Aorta (tissue), 5 donors: ENCODE measurements at regions of chr12 and their contacts with region 1.

Region 1: DNA sequence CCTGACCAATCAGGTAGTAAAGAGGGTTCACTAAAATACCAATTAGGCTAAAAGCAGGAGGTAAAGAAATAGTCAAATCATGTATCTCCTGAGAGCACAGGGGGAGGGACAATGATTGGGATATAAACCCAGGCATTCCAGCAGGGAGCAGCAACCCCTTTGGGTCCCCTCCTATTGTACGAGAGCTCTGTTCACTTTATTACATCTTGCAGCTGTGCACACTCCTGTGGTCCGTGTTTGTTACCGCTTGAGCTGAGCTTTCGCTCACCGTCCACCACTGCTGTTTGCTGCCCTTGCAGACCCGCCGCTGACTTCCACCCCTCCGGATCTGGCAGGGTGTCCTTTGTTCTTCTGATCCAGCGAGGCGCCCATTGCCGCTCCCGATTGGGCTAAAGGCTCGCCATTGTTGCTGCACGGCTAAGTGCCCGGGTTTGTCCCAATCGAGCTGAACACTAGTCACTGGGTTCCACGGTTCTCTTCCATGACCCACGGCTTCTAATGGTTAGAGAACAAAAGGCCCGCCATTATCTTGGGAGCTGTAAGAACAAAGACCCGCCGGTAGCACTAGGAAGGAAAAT is 64.1 kb downstream of the E2F7 start:
- DNase-seq: peak in 1 of 2 donors; percentile 60
- ATAC-seq: no peak
- H3K4me3 ChIP-seq: no peak overlapping the region
- H3K27ac ChIP-seq: no peak overlapping the region
- H3K4me1 ChIP-seq: no peaks in the 10 kb centered on the region
- H3K27me3 ChIP-seq: no peaks in the 10 kb centered on the region

Region 2: DNA sequence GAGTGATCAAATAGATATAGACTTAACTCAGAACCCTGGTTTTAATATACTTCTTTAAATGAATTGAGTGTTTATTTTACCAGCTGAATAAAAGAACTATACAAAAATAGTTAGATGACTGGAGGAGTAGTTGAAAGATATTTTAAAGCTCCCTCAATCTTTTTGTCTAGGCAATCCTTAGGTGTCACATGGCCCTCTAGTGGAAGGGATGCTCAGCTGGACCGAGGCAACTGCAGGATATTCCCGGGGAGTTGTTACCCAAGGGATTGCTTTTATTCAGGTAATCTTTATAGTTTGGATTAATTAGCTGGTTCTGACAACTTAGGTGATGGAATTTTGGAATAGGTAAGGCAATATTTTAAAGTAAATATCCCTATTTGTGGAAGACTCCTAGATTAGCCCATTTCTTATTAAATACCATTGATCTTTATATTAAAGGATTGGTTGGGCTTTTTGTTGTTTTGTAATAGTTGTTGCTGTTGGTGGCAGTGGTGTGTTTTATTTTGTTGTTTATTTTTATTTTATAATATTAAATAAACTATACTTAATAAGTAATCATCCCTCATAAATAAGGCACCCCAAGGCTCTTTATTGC is 180.3 kb before region 1 on chr12:
- intact Hi-C with region 1: loop called (anchors 10 kb)
- DNase-seq: peak in 1 of 2 donors; percentile 42
- ATAC-seq: no peak
- H3K4me3 ChIP-seq: no peak overlapping the region
- H3K27ac ChIP-seq: no peak overlapping the region
- H3K4me1 ChIP-seq: no peaks in the 10 kb centered on the region
- H3K27me3 ChIP-seq: no peaks in the 10 kb centered on the region

Region 3: GRCh38 chr12:77122236-77122635 is 121.0 kb after region 1 on chr12:
- intact Hi-C with region 1: no loop called
- DNase-seq: no peak
- ATAC-seq: no peak
- H3K4me3 ChIP-seq: no peak overlapping the region
- H3K27ac ChIP-seq: no peak overlapping the region
- H3K4me1 ChIP-seq: no peaks in the 10 kb centered on the region
- H3K27me3 ChIP-seq: no peaks in the 10 kb centered on the region